GM12878 (cell line): ENCODE measurements at regions of chr16 and their contacts with region 1.

Region 1: GRCh38 chr16:57167953-57168352 is 17.9 kb downstream of the PSME3IP1 start:
- DNase-seq: no peak
- ATAC-seq: peak; percentile 90
- H3K4me3 ChIP-seq: no peak overlapping the region
- H3K27ac ChIP-seq: no peak overlapping the region; the same call in 1 of the 2 replicates
- H3K4me1 ChIP-seq: peaks cover 19% of the 10 kb centered on the region
- H3K27me3 ChIP-seq: no peaks in the 10 kb centered on the region
- CTCF ChIP-seq: peak; percentile 61 to 82 (median 65)
- EP300 ChIP-seq: no peak
- POLR2A ChIP-seq: no peak
- RAD21 ChIP-seq: peak; percentile 96

Region 2: DNA sequence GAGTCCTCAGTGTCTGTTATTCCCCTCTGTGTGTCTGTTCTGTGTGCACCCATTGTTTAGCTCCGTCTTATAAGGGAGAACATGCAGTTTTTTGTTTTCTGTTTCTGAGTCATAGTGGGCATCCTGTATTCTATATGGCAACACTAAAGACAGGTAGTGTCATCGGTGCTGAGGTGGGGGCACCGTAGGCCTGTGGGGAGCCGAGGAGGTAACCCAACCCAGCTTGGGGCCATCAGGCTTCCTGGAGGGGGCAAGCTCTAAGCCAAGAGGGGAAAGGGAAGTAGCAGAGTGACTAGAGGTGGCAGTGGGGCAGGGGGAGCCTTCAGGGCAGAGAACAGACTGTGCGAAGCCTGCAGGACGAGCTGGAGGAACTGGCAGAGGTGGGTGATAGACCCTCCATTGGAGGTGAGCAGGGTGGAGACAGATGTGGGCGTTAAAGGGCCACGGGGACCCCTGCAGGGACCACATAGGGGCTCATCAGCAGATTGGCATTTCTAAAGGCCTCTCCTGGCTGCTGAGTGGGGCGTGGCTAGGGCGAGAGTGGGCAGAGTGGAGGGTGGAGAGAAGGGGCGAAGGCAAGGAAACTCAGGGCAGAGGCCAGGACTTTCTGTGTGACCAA is 39.1 kb before region 1 on chr16:
- CTCF ChIA-PET with region 1: interaction called, 3 read pairs
- POLR2A ChIA-PET with region 1: no interaction called
- RAD21 ChIA-PET with region 1: interaction called, 6 read pairs
- SMC1A ChIA-PET with region 1: no interaction called
- in situ Hi-C with region 1: no loop called
- intact Hi-C with region 1: loop called (anchors 5 kb)
- DNase-seq: peak; percentile 28
- ATAC-seq: peak; percentile 75
- H3K4me3 ChIP-seq: no peak overlapping the region
- H3K27ac ChIP-seq: no peak overlapping the region
- H3K4me1 ChIP-seq: peaks cover 31% of the 10 kb centered on the region
- H3K27me3 ChIP-seq: no peaks in the 10 kb centered on the region
- CTCF ChIP-seq: no peak
- EP300 ChIP-seq: no peak
- POLR2A ChIP-seq: no peak
- RAD21 ChIP-seq: no peak

Region 3: GRCh38 chr16:57235128-57236021 is 67.4 kb after region 1 on chr16:
- CTCF ChIA-PET with region 1: no interaction called
- POLR2A ChIA-PET with region 1: no interaction called
- RAD21 ChIA-PET with region 1: no interaction called
- SMC1A ChIA-PET with region 1: no interaction called
- in situ Hi-C with region 1: no loop called
- intact Hi-C with region 1: no loop called
- DNase-seq: no peak
- ATAC-seq: peak; percentile 44
- H3K4me3 ChIP-seq: no peak overlapping the region
- H3K27ac ChIP-seq: 0 out of 2 replicates have a peak overlapping the region, but pooled peaks have one; percentile 15
- H3K4me1 ChIP-seq: peaks cover 9% of the 10 kb centered on the region
- H3K27me3 ChIP-seq: no peaks in the 10 kb centered on the region
- CTCF ChIP-seq: no peak
- EP300 ChIP-seq: no peak
- POLR2A ChIP-seq: no peak
- RAD21 ChIP-seq: no peak